Heart left ventricle (tissue), 16 donors: ENCODE measurements at regions of chr22 and their contacts with region 1.

Region 1: GRCh38 chr22:20606041-20606783 is 98.8 kb downstream of the MED15 start:
- DNase-seq: peak in 1 of 5 donors; percentile 51
- ATAC-seq: peak in 3 of 4 donors; percentile 57 to 66 (median 57)
- H3K4me3 ChIP-seq: no peak overlapping the region
- H3K27ac ChIP-seq: no peak overlapping the region
- H3K4me1 ChIP-seq: peaks cover 0 to 4% (median 0%) of the 10 kb centered on the region in 12 donors
- H3K27me3 ChIP-seq: peaks cover 0 to 16% (median 0%) of the 10 kb centered on the region in 9 donors
- CTCF ChIP-seq: peak; percentile 39 to 65 (median 54)
- POLR2A ChIP-seq: no peak

Region 2: DNA sequence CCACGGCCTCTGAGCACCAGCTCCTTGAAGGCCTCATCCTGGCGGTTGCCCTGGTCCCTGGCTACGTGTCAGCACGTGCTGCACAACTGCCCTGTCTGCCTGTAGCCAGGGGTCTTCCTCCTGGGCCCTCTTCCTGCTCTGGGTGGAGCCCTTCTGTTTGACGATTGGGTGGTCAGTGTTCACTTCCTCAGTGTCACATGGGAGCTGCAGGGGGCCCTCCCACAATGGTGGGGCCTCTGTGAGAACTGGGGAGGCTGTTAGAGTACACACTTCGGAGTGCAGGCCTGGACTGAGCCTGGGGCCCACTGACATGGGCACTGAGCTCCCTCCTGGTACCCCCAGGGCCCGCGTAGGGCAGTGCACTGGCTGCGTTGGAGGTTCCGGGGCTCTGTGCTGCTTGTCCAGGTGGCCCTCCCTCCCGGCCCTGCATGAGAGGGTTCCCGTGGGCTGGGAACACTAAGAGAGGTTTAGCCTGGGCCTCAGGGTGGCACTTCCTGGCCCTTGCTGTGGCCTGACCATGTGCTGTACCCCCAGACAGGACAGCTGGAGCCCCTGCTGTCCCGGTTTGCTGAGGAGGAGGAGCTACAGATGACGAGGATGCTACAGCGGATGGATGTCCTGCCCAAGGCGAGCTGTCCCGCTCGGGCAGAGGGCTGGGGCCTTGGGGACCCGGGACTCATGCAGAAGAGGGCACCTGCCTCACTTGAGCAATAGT is 300.1 kb before region 1 on chr22:
- intact Hi-C with region 1: no loop called
- DNase-seq: peak in 1 of 5 donors; percentile 47
- ATAC-seq: peak in 1 of 4 donors; percentile 6
- H3K4me3 ChIP-seq: no peak overlapping the region
- H3K27ac ChIP-seq: no peak overlapping the region
- H3K4me1 ChIP-seq: no peaks in the 10 kb centered on the region
- H3K27me3 ChIP-seq: peaks cover 0 to 21% (median 8%) of the 10 kb centered on the region in 9 donors
- CTCF ChIP-seq: no peak
- POLR2A ChIP-seq: no peak

Region 3: DNA sequence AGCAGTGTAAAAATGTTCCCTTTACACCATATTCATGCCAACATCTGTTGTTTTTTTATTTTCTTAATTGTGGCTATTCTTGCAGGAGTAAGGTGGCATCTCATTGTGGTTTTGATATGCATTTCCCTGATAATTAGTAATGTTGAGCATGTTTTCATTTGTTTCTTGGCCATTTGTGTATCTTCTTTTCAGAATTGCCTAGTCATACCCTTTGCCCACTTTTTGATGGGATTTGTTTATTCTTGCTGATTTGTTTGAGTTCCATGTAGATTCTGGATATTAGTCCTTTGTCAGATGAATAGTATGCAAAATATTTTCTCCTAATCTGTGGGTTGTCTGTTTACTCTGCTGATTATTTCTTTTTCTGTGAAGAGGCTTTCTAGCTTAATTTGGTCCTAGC is 68.8 kb after region 1 on chr22:
- intact Hi-C with region 1: loop called in 1 of 10 experiments (anchors 10 kb)
- DNase-seq: no peak
- ATAC-seq: no peak
- H3K4me3 ChIP-seq: no peak overlapping the region
- H3K27ac ChIP-seq: no peak overlapping the region
- H3K4me1 ChIP-seq: peaks cover 0 to 6% (median 0%) of the 10 kb centered on the region in 12 donors
- H3K27me3 ChIP-seq: peaks cover 5 to 48% (median 10%) of the 10 kb centered on the region in 9 donors
- CTCF ChIP-seq: no peak
- POLR2A ChIP-seq: no peak

Region 4: GRCh38 chr22:20741634-20742581 is 135.7 kb after region 1 on chr22:
- intact Hi-C with region 1: loop called in 1 of 10 experiments (anchors 5 kb)
- DNase-seq: no peak
- ATAC-seq: peak in 1 of 4 donors; percentile 20
- H3K4me3 ChIP-seq: no peak overlapping the region
- H3K27ac ChIP-seq: no peak overlapping the region
- H3K4me1 ChIP-seq: peaks cover 0 to 7% (median 0%) of the 10 kb centered on the region in 12 donors
- H3K27me3 ChIP-seq: no peaks in the 10 kb centered on the region
- CTCF ChIP-seq: peak; percentile 32 to 63 (median 50)
- POLR2A ChIP-seq: no peak